OCI-LY7 (cell line): ENCODE measurements at regions of chr19 and their contacts with region 1.

Region 1: GRCh38 chr19:45469132-45469944 is 1.5 kb downstream of the FOSB start:
- DNase-seq: peak; percentile 98
- H3K4me3 ChIP-seq: peak overlapping the region; percentile 81
- H3K27ac ChIP-seq: peak overlapping the region; percentile 87
- H3K4me1 ChIP-seq: peaks cover 19% of the 10 kb centered on the region
- CTCF ChIP-seq: no peak

Region 2: DNA sequence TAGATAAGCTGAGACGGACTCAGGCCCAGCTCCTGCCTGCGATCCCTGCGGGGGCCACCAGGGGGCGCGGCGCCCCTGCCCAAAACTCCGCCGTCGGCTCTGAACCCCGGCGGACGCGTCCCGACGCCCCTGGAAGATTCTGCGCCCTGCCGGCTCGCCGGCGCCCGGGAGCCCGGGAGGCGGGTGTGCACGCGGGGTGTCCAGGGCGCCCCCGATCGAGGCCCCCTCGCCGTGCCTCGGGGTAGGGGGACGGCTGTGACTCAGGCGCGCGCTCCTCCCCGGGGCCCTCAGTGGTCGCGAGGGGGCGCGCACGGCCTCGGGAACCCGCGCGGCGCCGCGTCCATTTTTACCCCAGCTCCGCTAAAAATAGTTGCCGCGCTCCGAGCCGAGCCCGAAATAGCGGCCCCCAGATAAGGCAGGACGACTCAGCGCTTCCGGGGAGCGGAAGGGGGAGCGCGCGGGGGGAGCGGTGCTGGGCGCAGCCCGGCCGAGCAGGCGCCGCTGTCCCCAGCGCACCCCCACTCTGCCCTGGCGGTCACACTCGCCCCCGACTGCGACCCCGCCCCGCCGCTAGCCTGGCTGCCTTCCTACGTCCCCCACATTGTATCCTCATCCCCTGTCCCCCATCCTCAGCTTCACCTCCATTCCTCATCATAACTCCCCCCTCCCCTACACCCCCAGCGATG is 29.6 kb before region 1 on chr19:
- CTCF ChIA-PET with region 1: no interaction called
- POLR2A ChIA-PET with region 1: no interaction called
- intact Hi-C with region 1: no loop called
- DNase-seq: peak; percentile 89
- H3K4me3 ChIP-seq: peak overlapping the region; percentile 69
- H3K27ac ChIP-seq: peak overlapping the region; percentile 58
- H3K4me1 ChIP-seq: peaks cover 37% of the 10 kb centered on the region
- CTCF ChIP-seq: peak; percentile 99

Region 3: GRCh38 chr19:45451131-45451849 is 18.0 kb before region 1 on chr19:
- CTCF ChIA-PET with region 1: no interaction called
- POLR2A ChIA-PET with region 1: interaction called, 6 read pairs
- intact Hi-C with region 1: loop called (anchors 2 kb)
- DNase-seq: peak; percentile 72
- H3K4me3 ChIP-seq: peak overlapping the region; percentile 80
- H3K27ac ChIP-seq: peak overlapping the region; percentile 73
- H3K4me1 ChIP-seq: peaks cover 69% of the 10 kb centered on the region
- CTCF ChIP-seq: no peak